Right ventricle myocardium inferior (tissue), 1 donor: ENCODE measurements at regions of chr5 and their contacts with region 1.

Region 1: DNA sequence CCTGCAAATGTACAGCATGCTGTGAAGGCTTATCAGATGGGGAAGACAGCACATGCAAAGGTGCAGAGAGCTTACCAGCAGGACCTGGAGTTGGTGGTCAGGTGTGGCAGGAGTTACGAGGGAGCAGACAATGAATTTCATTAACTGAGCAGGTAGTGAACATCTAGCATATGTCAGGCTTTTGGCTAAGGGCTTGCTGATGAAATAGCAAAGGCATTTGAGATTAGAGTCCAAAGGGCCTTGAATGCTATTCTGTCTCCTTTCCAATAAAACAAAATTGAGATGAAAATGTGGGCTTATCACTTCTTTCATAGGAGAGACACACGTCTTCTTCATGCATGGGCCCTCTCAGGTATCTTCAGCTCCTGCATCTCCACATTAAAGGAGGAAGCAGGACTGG is 36.6 kb upstream of the PPARGC1B start:
- DNase-seq: no peak
- ATAC-seq: no peak

Region 2: GRCh38 chr5:149586791-149587283 is 106.6 kb before region 1 on chr5:
- intact Hi-C with region 1: no loop called
- DNase-seq: no peak
- ATAC-seq: no peak

Region 3: GRCh38 chr5:149680810-149681221 is 12.7 kb before region 1 on chr5:
- intact Hi-C with region 1: loop called (anchors 1 kb)
- DNase-seq: peak; percentile 77
- ATAC-seq: peak; percentile 76